ENCODE measurements at regions of chr20 and their contacts with region 1.

Region 1: GRCh38 chr20:17504898-17505635 is 26.1 kb downstream of the BFSP1 start:
- DNase-seq: peak; percentile 75 to 88 (median 87)
- H3K4me3 ChIP-seq: peak overlapping the region; percentile 37 to 80 (median 67)
- H3K27ac ChIP-seq: no peak overlapping the region
- H3K4me1 ChIP-seq: peaks cover 0 to 38% (median 20%) of the 10 kb centered on the region in 4 experiments
- H3K27me3 ChIP-seq: no peaks in the 10 kb centered on the region

Region 2: DNA sequence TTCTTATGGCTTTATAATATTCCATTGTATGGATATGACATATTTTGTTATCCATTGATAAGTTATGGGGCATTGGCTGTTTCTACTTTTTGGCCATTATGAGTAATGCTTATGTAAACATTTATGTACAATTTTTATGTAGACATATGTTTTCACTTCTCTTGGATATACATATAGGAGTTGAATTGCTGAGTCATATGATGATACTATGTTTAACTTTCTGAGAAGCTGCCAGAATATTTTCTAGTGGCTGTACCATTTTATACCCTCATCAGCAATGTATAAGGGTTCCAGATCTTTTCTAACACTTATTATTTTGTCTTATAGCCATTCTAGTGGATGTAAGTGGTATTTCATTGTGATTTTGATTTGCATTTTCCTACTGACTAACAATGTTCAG is 733.9 kb before region 1 on chr20:
- CTCF ChIA-PET with region 1: no interaction called
- POLR2A ChIA-PET with region 1: no interaction called
- DNase-seq: no peak
- H3K4me3 ChIP-seq: no peak overlapping the region
- H3K27ac ChIP-seq: no peak overlapping the region
- H3K4me1 ChIP-seq: no peaks in the 10 kb centered on the region
- H3K27me3 ChIP-seq: peaks cover 0 to 13% (median 3%) of the 10 kb centered on the region in 5 experiments

Region 3: GRCh38 chr20:17421493-17421892 is 83.6 kb before region 1 on chr20:
- CTCF ChIA-PET with region 1: no interaction called
- POLR2A ChIA-PET with region 1: no interaction called
- DNase-seq: no peak
- H3K4me3 ChIP-seq: no peak overlapping the region
- H3K27ac ChIP-seq: no peak overlapping the region
- H3K4me1 ChIP-seq: no peaks in the 10 kb centered on the region
- H3K27me3 ChIP-seq: peaks cover 0 to 4% (median 0%) of the 10 kb centered on the region in 5 experiments

Region 4: GRCh38 chr20:17485017-17485416 is 20.1 kb before region 1 on chr20:
- CTCF ChIA-PET with region 1: no interaction called
- POLR2A ChIA-PET with region 1: no interaction called
- DNase-seq: no peak
- H3K4me3 ChIP-seq: no peak overlapping the region
- H3K27ac ChIP-seq: no peak overlapping the region
- H3K4me1 ChIP-seq: no peaks in the 10 kb centered on the region
- H3K27me3 ChIP-seq: peaks cover 0 to 8% (median 2%) of the 10 kb centered on the region in 5 experiments

Region 5: DNA sequence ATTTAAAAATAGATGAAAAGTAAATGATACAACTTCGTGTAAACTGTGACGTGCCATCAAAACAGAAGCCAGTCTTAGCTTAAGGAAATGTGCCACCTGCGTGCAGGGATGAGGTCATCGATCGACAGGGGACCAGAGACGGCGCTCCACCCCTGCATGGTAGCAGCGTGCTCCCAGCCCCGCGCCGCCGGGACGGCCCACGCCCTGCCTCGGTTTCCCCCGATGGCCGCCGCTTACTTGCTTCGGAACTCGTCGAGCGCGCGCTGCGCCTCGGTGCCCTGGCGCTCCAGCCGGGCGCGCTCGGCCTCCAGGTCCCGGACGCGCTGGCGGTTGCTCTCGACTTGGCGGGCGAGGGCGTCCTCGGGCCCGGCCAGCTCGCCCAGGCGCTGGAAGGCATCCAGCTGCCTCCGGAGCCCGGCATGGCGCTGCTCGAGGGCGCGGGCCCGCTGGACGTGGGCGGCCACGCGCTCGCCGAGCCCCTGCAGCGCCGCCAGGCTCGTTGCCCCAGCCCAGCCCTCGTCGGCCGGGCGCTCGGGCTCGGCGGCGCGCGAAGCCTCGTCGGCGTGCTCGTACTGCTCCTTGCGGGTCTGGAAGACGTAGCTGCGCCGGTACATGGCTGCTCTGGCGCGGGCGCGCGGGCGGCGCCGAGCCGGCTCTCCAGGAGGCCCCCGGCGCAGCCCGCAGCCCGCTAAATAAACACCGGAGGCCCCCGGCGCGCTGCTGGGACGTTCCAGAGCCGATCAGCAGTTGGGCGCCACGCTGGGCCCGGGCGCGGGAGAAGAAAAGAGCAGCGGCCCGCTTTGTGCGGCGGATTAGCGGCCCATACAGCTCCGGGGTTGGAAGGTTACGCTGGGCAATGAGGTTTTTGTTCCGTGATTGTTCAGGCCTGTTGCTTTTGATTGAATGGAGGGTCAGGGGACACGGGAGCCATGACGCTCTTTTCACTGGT is 25.9 kb after region 1 on chr20 and contains the start of gene BFSP1:
- CTCF ChIA-PET with region 1: interaction called, 13 read pairs
- POLR2A ChIA-PET with region 1: no interaction called
- DNase-seq: peak; percentile 39 to 83 (median 75)
- H3K4me3 ChIP-seq: peak within 1 kb of the TSS; percentile 19 to 77 (median 51)
- H3K27ac ChIP-seq: no peak within 1 kb of the TSS
- H3K4me1 ChIP-seq: peaks cover 0 to 15% (median 12%) of the 10 kb centered on the region in 4 experiments
- H3K27me3 ChIP-seq: peaks cover 0 to 12% (median 2%) of the 10 kb centered on the region in 5 experiments

Region 6: GRCh38 chr20:17611540-17612286 is 106.6 kb after region 1 on chr20:
- CTCF ChIA-PET with region 1: interaction called, 36 read pairs
- POLR2A ChIA-PET with region 1: no interaction called
- DNase-seq: peak in 2 of 3 donors; percentile 9 to 18
- H3K4me3 ChIP-seq: no peak overlapping the region
- H3K27ac ChIP-seq: no peak overlapping the region
- H3K4me1 ChIP-seq: peaks cover 6 to 65% (median 44%) of the 10 kb centered on the region in 4 experiments
- H3K27me3 ChIP-seq: no peaks in the 10 kb centered on the region

Region 7: DNA sequence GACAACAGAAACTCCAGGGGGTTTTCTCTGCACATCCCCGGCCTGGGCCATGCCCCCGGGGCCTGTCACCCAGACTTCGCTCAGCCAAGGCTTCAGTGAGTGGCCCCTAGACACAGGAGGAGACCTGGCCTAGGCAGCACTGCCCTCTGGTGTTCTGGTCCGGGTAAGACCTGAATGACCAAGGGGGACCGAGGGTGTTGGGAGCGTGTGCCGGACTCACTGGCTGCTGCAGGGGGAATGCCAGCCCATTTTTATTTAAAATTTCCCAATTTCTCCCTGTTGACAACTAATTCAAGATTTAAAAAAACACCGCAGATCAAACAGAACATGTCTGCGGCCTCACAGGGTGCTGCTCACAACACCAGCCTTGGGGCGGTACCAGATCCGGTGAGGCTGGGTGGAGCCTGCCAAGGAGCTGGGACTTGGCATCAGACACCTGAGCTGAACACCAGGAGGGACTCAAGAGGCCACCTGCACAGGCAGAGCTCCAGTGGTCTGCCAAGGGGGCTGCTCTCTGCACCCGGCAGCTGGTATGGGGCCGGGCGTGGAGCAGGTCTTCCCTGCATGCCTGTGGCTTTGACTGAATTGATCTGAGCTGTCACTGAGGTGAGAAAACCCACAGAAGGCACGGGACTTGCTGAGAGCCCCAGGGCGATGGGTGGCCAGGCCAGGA is 112.6 kb after region 1 on chr20:
- CTCF ChIA-PET with region 1: interaction called, 36 read pairs
- POLR2A ChIA-PET with region 1: no interaction called
- DNase-seq: peak; percentile 29 to 57 (median 52)
- H3K4me3 ChIP-seq: no peak overlapping the region
- H3K27ac ChIP-seq: no peak overlapping the region
- H3K4me1 ChIP-seq: peaks cover 0 to 31% (median 17%) of the 10 kb centered on the region in 4 experiments
- H3K27me3 ChIP-seq: no peaks in the 10 kb centered on the region

Region 8: DNA sequence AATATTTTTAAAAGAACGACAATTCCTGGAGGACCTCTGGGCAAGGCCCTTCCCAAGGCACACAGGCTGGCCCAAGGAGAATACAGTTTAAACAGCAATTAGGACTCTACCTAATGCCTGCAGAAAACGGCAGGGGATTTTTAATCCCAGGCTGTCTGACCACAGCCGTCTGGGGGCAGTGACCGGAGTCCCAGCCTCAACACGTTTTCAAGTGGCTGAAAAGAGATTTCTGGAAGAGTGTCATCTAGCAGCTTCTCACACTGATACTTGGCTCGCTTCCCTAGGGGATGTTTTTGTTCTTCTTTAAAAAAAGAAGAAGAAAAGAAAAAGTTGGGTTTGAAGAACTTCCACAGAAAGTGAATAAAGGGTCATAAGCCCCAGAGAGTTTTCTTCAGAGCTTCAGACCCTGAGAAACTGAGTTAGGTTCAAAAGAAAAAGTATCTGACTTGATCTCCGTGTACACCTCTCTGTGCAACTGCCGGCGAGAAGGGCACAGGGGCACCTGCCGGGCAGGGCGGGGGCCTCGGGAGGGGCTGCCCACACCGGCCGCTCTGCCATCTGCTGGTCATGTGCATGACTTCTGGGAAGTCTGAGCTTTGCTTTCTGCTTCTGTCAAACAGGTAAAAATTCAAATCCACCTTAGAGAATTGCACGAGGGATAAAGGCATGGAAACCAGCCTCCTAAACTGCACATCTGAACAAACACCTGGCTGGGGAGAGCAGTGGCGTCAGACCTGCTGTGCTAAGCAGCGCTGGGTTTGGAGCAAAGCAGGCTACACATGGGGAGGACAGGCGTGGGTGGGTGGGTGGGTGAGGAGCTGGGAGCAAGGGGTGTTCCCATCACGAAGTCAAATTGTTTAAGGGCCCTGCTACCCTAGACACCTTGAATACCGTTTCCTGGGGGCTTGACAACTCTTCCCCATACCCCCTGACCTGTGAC is 144.0 kb after region 1 on chr20:
- CTCF ChIA-PET with region 1: interaction called, 17 read pairs
- POLR2A ChIA-PET with region 1: no interaction called
- DNase-seq: peak; percentile 25 to 61 (median 57)
- H3K4me3 ChIP-seq: peak overlapping the region in 1 of 7 experiments; percentile 6
- H3K27ac ChIP-seq: peak overlapping the region; percentile 51 to 72
- H3K4me1 ChIP-seq: peaks cover 23 to 82% (median 53%) of the 10 kb centered on the region in 4 experiments
- H3K27me3 ChIP-seq: no peaks in the 10 kb centered on the region